Caco-2 (cell line): ENCODE measurements at regions of chr5 and their contacts with region 1.

Region 1: DNA sequence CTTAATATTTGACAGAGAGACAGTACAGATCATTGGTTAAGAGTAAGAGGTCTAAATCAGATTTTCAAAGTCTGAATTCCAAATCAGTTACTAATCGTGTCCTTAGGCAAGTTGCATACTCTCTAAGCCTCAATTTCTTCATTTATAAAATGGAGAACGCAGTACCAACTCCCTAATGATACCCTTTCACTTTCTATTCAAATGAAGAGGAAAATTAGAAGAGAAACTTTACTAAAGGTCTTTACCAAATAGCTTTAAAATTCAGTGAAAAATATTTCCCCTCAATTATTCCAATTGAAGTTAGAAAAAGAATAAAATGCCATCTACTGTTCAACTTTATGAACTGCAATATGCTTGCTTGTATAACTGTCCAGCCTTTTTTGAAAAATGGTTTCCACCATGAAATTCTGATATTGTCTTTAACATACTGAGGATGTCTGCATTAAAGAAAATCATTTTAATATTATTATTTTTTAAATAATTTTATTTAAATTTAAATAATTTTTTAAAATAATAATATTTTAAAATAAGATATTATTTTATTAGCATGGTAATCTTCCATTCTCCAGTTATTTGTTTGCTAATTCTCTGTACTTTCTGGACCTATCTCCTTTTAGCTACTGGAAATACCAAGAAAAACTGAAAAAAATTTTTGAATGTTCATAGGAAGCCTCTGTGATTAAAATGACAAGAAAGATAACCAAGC is 36.0 kb downstream of the POC5 start:
- DNase-seq: no peak
- H3K4me3 ChIP-seq: no peak overlapping the region
- H3K4me3 Mint-ChIP-seq: no peak overlapping the region
- H3K27ac Mint-ChIP-seq: no peak overlapping the region
- H3K4me1 ChIP-seq: peaks cover 5% of the 10 kb centered on the region; the same call in 1 of the 2 replicates
- H3K4me1 Mint-ChIP-seq: no peaks in the 10 kb centered on the region
- H3K27me3 ChIP-seq: no peaks in the 10 kb centered on the region
- H3K27me3 Mint-ChIP-seq: no peaks in the 10 kb centered on the region
- CTCF ChIP-seq: peak; percentile 56 to 85

Region 2: GRCh38 chr5:75363726-75364495 is 317.4 kb before region 1 on chr5:
- CTCF ChIA-PET with region 1: no interaction called
- POLR2A ChIA-PET with region 1: no interaction called
- intact Hi-C with region 1: loop called (anchors 5 kb)
- DNase-seq: no peak
- H3K4me3 ChIP-seq: no peak overlapping the region
- H3K4me3 Mint-ChIP-seq: peak overlapping the region; percentile 10
- H3K27ac Mint-ChIP-seq: peak overlapping the region; percentile 26
- H3K4me1 ChIP-seq: no peaks in the 10 kb centered on the region
- H3K4me1 Mint-ChIP-seq: no peaks in the 10 kb centered on the region
- H3K27me3 ChIP-seq: no peaks in the 10 kb centered on the region
- H3K27me3 Mint-ChIP-seq: no peaks in the 10 kb centered on the region
- CTCF ChIP-seq: no peak

Region 3: GRCh38 chr5:75584641-75585040 is 96.6 kb before region 1 on chr5:
- CTCF ChIA-PET with region 1: interaction called, 5 read pairs
- POLR2A ChIA-PET with region 1: no interaction called
- intact Hi-C with region 1: loop called (anchors 1 kb)
- DNase-seq: no peak
- H3K4me3 ChIP-seq: no peak overlapping the region
- H3K4me3 Mint-ChIP-seq: no peak overlapping the region
- H3K27ac Mint-ChIP-seq: no peak overlapping the region
- H3K4me1 ChIP-seq: no peaks in the 10 kb centered on the region
- H3K4me1 Mint-ChIP-seq: no peaks in the 10 kb centered on the region
- H3K27me3 ChIP-seq: no peaks in the 10 kb centered on the region
- H3K27me3 Mint-ChIP-seq: no peaks in the 10 kb centered on the region
- CTCF ChIP-seq: peak; percentile 32 to 36

Region 4: GRCh38 chr5:76601470-76601869 is 920.2 kb after region 1 on chr5:
- CTCF ChIA-PET with region 1: no interaction called
- POLR2A ChIA-PET with region 1: no interaction called
- intact Hi-C with region 1: no loop called
- DNase-seq: peak in 1 of 2 experiments; percentile 62
- H3K4me3 ChIP-seq: no peak overlapping the region
- H3K4me3 Mint-ChIP-seq: no peak overlapping the region
- H3K27ac Mint-ChIP-seq: no peak overlapping the region
- H3K4me1 ChIP-seq: no peaks in the 10 kb centered on the region
- H3K4me1 Mint-ChIP-seq: peaks cover 9% of the 10 kb centered on the region
- H3K27me3 ChIP-seq: no peaks in the 10 kb centered on the region
- H3K27me3 Mint-ChIP-seq: no peaks in the 10 kb centered on the region
- CTCF ChIP-seq: peak; percentile 70 to 82